ENCODE measurements at regions of chr11 and their contacts with region 1.

Region 1: GRCh38 chr11:59171508-59172322 is at the start of gene DTX4:
- DNase-seq: peak; percentile 93
- H3K4me3 Mint-ChIP-seq: peak within 1 kb of the TSS; percentile 72
- H3K27ac Mint-ChIP-seq: no peak within 1 kb of the TSS
- H3K4me1 Mint-ChIP-seq: peaks cover 21% of the 10 kb centered on the region
- H3K27me3 Mint-ChIP-seq: peaks cover 10% of the 10 kb centered on the region
- total RNA-seq, gene DTX4: 0.05 to 0.07 TPM

Region 2: DNA sequence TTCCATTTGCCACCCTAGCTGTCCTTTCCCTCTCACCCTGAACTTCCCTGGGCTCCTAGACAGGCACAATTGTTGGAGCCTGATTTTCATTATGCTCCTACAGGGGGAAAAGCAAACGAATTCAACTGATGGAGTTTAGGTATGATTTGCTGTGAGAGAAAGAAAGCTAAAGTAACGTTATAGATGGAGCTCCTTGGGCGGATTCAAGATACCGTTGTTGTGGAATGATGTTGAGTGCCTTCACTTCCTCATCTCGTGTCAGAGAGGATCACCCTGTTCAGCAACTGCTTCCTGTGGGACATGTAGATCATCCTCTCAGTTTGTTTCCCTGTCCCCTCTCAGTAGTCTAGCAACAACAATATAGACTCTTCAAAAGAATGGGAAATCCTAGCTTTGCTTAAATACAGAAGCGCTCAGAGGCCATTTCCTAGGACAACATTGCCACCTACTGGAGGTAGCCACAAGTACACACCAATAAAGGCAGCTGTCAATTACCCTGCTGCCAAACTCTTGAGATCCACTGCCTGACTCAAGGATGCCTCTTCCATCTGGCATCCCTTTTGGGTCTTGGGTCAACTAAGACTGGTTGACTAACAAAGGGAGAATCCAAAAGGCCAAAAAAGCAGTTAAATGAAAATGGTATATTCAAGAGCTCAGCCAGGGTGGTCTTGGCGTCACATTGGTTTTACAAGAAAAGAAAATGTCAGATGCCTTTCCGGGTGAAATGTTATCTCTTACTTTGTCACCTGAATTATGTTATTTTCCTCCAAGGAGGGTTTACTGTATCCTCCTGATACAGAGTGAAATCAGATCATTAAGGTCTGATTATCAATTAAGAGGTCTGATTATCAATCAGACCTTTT is 13.3 kb before region 1 on chr11:
- CTCF ChIA-PET with region 1: interaction called, 52 read pairs
- POLR2A ChIA-PET with region 1: interaction called, 3 read pairs
- intact Hi-C with region 1: no loop called
- DNase-seq: peak; percentile 68
- H3K4me3 Mint-ChIP-seq: no peak overlapping the region
- H3K27ac Mint-ChIP-seq: no peak overlapping the region
- H3K4me1 Mint-ChIP-seq: peaks cover 4% of the 10 kb centered on the region
- H3K27me3 Mint-ChIP-seq: peaks cover 13% of the 10 kb centered on the region

Region 3: DNA sequence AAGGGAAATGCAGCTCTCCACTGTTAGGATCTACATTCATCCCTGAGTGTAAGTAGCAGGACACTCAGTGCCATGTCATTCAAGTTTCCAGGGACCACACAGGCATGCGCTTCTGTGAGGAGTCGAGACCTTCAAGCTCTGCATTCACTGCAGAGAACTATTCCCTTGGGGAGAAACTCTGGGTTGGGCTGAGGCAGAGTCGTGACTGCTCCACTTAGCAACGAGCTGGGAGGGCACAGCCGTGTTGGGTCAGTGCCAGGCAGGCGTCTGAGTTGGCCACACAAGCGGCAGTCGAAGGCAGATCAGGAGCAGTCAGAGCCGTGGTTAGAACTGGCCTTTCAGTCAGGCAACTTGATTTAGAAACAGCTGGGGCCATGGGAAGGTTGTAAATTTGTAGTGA is 26.3 kb after region 1 on chr11:
- CTCF ChIA-PET with region 1: interaction called, 61 read pairs
- POLR2A ChIA-PET with region 1: no interaction called
- intact Hi-C with region 1: loop called (anchors 1 kb)
- DNase-seq: no peak
- H3K4me3 Mint-ChIP-seq: no peak overlapping the region
- H3K27ac Mint-ChIP-seq: no peak overlapping the region
- H3K4me1 Mint-ChIP-seq: peaks cover 16% of the 10 kb centered on the region
- H3K27me3 Mint-ChIP-seq: no peaks in the 10 kb centered on the region

Region 4: GRCh38 chr11:59224351-59224928 is 52.7 kb after region 1 on chr11:
- CTCF ChIA-PET with region 1: interaction called, 12 read pairs
- POLR2A ChIA-PET with region 1: no interaction called
- intact Hi-C with region 1: no loop called
- DNase-seq: no peak
- H3K4me3 Mint-ChIP-seq: no peak overlapping the region
- H3K27ac Mint-ChIP-seq: no peak overlapping the region
- H3K4me1 Mint-ChIP-seq: peaks cover 6% of the 10 kb centered on the region
- H3K27me3 Mint-ChIP-seq: peaks cover 3% of the 10 kb centered on the region

Region 5: GRCh38 chr11:59289356-59290181 is 117.9 kb after region 1 on chr11:
- CTCF ChIA-PET with region 1: interaction called, 15 read pairs
- POLR2A ChIA-PET with region 1: no interaction called
- intact Hi-C with region 1: loop called (anchors 1 kb)
- DNase-seq: no peak
- H3K4me3 Mint-ChIP-seq: no peak overlapping the region
- H3K27ac Mint-ChIP-seq: no peak overlapping the region
- H3K4me1 Mint-ChIP-seq: peaks cover 2% of the 10 kb centered on the region
- H3K27me3 Mint-ChIP-seq: peaks cover 8% of the 10 kb centered on the region

Region 6: GRCh38 chr11:59680287-59681154 is 508.8 kb after region 1 on chr11:
- CTCF ChIA-PET with region 1: interaction called, 3 read pairs
- POLR2A ChIA-PET with region 1: no interaction called
- intact Hi-C with region 1: loop called (anchors 1 kb)
- DNase-seq: peak; percentile 67
- H3K4me3 Mint-ChIP-seq: no peak overlapping the region
- H3K27ac Mint-ChIP-seq: no peak overlapping the region
- H3K4me1 Mint-ChIP-seq: no peaks in the 10 kb centered on the region
- H3K27me3 Mint-ChIP-seq: peaks cover 18% of the 10 kb centered on the region